Calu3 (cell line): ENCODE measurements at regions of chr9 and their contacts with region 1.

Region 1: GRCh38 chr9:128829477-128830251 is at the start of gene SPOUT1:
- DNase-seq: peak; percentile 91
- H3K4me3 Mint-ChIP-seq: peak within 1 kb of the TSS; percentile 99
- H3K27ac Mint-ChIP-seq: peak within 1 kb of the TSS; percentile 90
- H3K4me1 Mint-ChIP-seq: peaks cover 9% of the 10 kb centered on the region
- H3K27me3 Mint-ChIP-seq: no peaks in the 10 kb centered on the region
- CTCF ChIP-seq: no peak
- total RNA-seq, gene SPOUT1: 35.8 and 46.8 TPM in 2 replicates

Region 2: GRCh38 chr9:128818099-128818838 is 11.4 kb before region 1 on chr9 and contains the start of gene ENDOG:
- CTCF ChIA-PET with region 1: interaction called, 22 read pairs
- intact Hi-C with region 1: no loop called
- DNase-seq: peak; percentile 97
- H3K4me3 Mint-ChIP-seq: peak within 1 kb of the TSS; percentile 60
- H3K27ac Mint-ChIP-seq: no peak within 1 kb of the TSS
- H3K4me1 Mint-ChIP-seq: no peaks in the 10 kb centered on the region
- H3K27me3 Mint-ChIP-seq: no peaks in the 10 kb centered on the region
- CTCF ChIP-seq: peak; percentile 84
- total RNA-seq, gene ENDOG: 15.2 and 17.5 TPM in 2 replicates